Cardiac septum (tissue), 1 donor: ENCODE measurements at regions of chr3 and their contacts with region 1.

Region 1: GRCh38 chr3:141913150-141913811 is 36.8 kb downstream of the ATP1B3 start:
- DNase-seq: no peak

Region 2: DNA sequence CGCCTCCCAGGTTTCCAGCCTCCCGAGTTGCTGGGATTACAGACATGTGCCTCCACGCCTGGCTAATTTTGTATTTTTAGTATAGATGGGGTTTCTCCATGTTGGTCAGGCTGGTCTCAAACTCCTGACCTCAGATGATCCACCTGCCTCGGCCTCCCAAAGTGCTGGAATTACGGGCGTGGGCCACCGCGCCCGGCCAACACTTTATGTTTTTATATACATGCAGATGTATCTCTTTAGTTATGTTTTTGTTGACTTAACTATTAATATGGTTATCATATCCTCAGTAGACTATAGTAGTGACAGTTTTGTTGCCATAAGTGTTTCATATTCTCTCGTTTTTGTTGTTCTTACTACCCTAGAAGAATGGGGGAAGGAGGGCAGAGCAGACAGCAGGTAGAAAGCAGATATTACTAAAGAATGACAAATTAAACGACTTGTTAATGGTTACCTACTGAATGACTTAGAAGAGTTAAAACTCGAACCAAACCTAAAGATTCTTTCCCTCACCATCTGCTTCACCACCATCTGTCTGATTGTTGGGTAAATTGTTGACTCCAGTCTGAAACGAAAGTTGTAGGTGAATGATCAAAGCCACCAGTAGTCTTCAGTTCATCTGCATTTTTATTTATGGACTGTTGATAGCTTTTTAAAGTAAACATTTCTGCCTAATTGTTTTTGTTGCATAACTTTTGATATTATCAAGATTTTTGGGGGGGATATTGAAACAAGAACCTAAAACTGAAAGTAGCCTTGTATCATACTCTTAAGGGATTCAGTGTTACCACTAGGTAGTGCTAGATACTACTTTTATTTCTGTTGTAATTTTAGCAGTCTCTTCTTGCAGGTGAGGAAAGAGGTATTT is 337.2 kb before region 1 on chr3:
- intact Hi-C with region 1: loop called (anchors 5 kb)
- DNase-seq: no peak